CD4-positive, alpha-beta T cell (primary cell): ENCODE measurements at regions of chr10 and their contacts with region 1.

Region 1: DNA sequence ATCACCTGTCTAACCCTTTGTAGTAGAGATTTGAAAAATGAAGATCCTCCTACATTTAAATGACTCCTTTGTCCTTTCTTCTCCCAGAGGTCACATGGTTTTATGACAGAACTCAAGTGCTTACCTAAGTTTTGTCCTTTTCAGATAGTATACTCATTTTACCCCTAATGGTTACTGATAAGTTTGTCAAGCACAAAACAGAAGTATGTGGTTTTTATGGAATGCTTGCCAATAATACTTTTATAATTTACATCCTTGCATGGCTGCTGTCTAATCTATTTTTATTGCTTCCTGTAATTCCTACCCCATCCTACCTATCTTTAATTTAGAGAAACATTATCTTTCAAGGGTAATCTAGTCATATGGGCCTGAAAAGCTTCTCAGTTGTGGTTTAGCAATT is 37.5 kb downstream of the HELLS start:
- DNase-seq: no peak
- ATAC-seq: no peak
- H3K4me3 ChIP-seq: no peak overlapping the region
- H3K4me3 Mint-ChIP-seq: no peak overlapping the region
- H3K27ac ChIP-seq: no peak overlapping the region
- H3K27ac Mint-ChIP-seq: no peak overlapping the region
- H3K4me1 ChIP-seq: no peaks in the 10 kb centered on the region
- H3K4me1 Mint-ChIP-seq: no peaks in the 10 kb centered on the region
- H3K27me3 ChIP-seq: no peaks in the 10 kb centered on the region
- H3K27me3 Mint-ChIP-seq: no peaks in the 10 kb centered on the region
- CTCF ChIP-seq: no peak

Region 2: DNA sequence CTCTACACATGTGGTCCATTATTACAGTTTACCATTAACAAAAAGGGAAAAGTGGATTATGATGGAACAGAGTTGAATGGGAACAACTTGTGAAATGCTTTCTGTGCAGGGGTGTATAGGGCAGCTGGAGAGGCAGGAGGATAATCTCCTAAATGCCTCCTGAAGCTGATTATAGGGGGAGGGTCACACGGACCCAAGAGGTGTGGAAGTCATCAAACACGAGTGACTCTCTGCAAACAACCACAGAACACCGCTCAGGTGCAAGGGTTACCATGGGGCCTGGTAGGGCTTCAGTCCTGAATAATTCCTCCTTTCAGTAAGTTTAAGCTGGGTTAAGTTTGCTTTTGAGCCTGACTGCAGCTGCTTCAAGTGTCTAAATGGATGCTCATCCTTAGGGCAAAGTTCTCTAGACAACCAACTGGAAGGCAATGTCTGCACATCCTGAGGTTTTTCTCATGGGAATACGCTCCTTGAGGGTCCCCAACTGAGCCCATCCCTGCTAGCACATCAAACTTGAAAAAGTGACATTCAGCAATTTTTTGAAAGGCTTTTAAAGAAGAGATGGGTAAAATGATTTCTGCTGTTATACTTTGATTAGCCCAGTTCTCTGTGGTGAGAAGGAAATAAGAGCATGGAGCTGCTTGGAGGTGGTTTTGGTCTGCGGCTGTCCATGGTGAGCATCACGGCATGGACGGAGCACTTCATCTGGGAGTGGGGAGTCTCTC is 968.9 kb before region 1 on chr10:
- CTCF ChIA-PET with region 1: no interaction called
- POLR2A ChIA-PET with region 1: no interaction called
- intact Hi-C with region 1: loop called in 1 of 2 experiments (anchors 5 kb)
- DNase-seq: no peak
- ATAC-seq: no peak
- H3K4me3 ChIP-seq: no peak overlapping the region
- H3K4me3 Mint-ChIP-seq: no peak overlapping the region
- H3K27ac ChIP-seq: no peak overlapping the region
- H3K27ac Mint-ChIP-seq: no peak overlapping the region
- H3K4me1 ChIP-seq: no peaks in the 10 kb centered on the region
- H3K4me1 Mint-ChIP-seq: no peaks in the 10 kb centered on the region
- H3K27me3 ChIP-seq: peaks cover 0 to 2% of the 10 kb centered on the region in 2 experiments
- H3K27me3 Mint-ChIP-seq: peaks cover 27% of the 10 kb centered on the region
- CTCF ChIP-seq: no peak